Activated CD4-positive, alpha-beta memory T cell treated with anti-CD3 and anti-CD28 coated beads for 36 hours (primary cell): ENCODE measurements at regions of chr5 and their contacts with region 1.

Region 1: GRCh38 chr5:173016621-173017047 is 33.1 kb downstream of the ATP6V0E1 start:
- DNase-seq: no peak
- H3K4me3 Mint-ChIP-seq: no peak overlapping the region
- H3K27ac Mint-ChIP-seq: peak overlapping the region; percentile 74
- H3K4me1 Mint-ChIP-seq: peaks cover 31% of the 10 kb centered on the region
- H3K27me3 Mint-ChIP-seq: no peaks in the 10 kb centered on the region

Region 2: GRCh38 chr5:173003360-173003759 is 13.3 kb before region 1 on chr5:
- CTCF ChIA-PET with region 1: no interaction called
- POLR2A ChIA-PET with region 1: interaction called, 4 read pairs
- intact Hi-C with region 1: loop called (anchors 2 kb)
- DNase-seq: no peak
- H3K4me3 Mint-ChIP-seq: no peak overlapping the region
- H3K27ac Mint-ChIP-seq: no peak overlapping the region
- H3K4me1 Mint-ChIP-seq: peaks cover 77% of the 10 kb centered on the region
- H3K27me3 Mint-ChIP-seq: no peaks in the 10 kb centered on the region

Region 3: GRCh38 chr5:173051746-173052145 is 35.1 kb after region 1 on chr5:
- CTCF ChIA-PET with region 1: no interaction called
- POLR2A ChIA-PET with region 1: no interaction called
- intact Hi-C with region 1: no loop called
- DNase-seq: no peak
- H3K4me3 Mint-ChIP-seq: no peak overlapping the region
- H3K27ac Mint-ChIP-seq: no peak overlapping the region
- H3K4me1 Mint-ChIP-seq: peaks cover 19% of the 10 kb centered on the region
- H3K27me3 Mint-ChIP-seq: no peaks in the 10 kb centered on the region